ENCODE measurements at regions of chr1 and their contacts with region 1.

Region 1: GRCh38 chr1:153192697-153193096 is 10.5 kb upstream of the LELP1 start:
- DNase-seq: peak; percentile 77
- H3K4me3 Mint-ChIP-seq: no peak overlapping the region
- H3K27ac Mint-ChIP-seq: no peak overlapping the region
- H3K4me1 Mint-ChIP-seq: peaks cover 8% of the 10 kb centered on the region
- H3K27me3 Mint-ChIP-seq: peaks cover 27% of the 10 kb centered on the region
- CTCF ChIP-seq: peak; percentile 98

Region 2: DNA sequence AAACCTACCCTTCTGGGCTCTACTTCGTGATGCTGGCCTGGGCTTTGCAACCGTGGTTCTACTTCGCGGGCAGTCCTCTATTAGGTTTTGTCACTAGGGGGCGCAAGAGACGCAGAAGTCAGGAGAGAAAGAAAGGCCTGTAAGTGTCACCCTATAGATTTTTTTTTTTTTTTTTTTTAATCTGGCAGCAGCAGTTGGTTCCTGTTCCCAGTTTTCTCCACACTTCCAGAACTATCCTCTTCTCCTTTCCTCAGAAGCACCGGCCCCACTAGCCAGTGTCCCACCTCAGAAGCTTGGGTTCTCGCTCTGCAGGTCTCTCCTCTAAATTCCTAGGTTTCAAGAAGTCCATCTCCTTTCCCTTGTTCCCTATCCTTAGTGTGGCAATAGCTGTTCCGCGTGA is 538.6 kb before region 1 on chr1:
- CTCF ChIA-PET with region 1: interaction called, 125 read pairs
- POLR2A ChIA-PET with region 1: no interaction called
- intact Hi-C with region 1: loop called (anchors 1 kb)
- DNase-seq: peak; percentile 91
- H3K4me3 Mint-ChIP-seq: no peak overlapping the region
- H3K27ac Mint-ChIP-seq: no peak overlapping the region
- H3K4me1 Mint-ChIP-seq: no peaks in the 10 kb centered on the region
- H3K27me3 Mint-ChIP-seq: no peaks in the 10 kb centered on the region
- CTCF ChIP-seq: peak; percentile 87

Region 3: DNA sequence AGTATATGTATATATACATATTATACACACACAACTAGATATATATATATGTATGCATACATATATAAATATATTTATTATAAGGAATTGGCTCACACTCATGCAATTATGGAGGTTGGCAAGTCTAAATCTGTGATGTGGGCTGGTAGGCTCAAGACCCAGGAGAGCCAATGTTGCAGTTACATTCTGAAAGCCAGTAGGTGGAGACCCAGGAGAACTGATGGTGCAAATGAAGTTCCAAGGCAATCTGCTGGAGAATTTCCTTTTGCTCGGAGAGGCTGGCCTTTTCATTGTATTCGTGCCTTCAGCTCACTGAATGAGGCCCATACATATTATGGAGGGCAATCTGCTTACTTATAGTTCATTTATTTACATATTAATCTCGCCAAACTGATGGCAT is 274.9 kb before region 1 on chr1:
- CTCF ChIA-PET with region 1: interaction called, 172 read pairs
- POLR2A ChIA-PET with region 1: interaction called, 3 read pairs
- intact Hi-C with region 1: loop called (anchors 1 kb)
- DNase-seq: peak; percentile 37
- H3K4me3 Mint-ChIP-seq: no peak overlapping the region
- H3K27ac Mint-ChIP-seq: no peak overlapping the region
- H3K4me1 Mint-ChIP-seq: peaks cover 8% of the 10 kb centered on the region
- H3K27me3 Mint-ChIP-seq: no peaks in the 10 kb centered on the region
- CTCF ChIP-seq: peak; percentile 40

Region 4: DNA sequence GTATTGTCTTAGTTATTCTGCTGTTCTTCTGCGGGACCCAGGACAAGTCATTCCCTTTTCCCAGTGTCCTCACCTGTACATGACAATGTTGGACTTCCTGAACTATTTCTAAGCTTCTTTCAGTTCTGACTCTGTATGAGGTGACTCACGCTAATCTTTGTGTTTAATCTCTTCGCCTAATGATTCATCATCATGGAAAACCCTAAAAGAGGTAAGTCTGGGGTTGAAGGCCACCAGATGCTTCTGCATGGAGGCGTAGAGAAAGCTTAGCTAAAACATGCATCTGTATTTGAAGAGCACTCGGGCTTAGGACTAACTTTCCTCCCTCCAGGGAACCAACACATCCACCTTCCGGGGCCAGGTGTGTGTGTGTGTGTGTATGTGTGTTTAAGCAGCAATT is 238.3 kb before region 1 on chr1:
- CTCF ChIA-PET with region 1: interaction called, 8 read pairs
- POLR2A ChIA-PET with region 1: no interaction called
- intact Hi-C with region 1: loop called (anchors 1 kb)
- DNase-seq: peak; percentile 85
- H3K4me3 Mint-ChIP-seq: peak overlapping the region; percentile 48
- H3K27ac Mint-ChIP-seq: peak overlapping the region; percentile 5
- H3K4me1 Mint-ChIP-seq: peaks cover 24% of the 10 kb centered on the region
- H3K27me3 Mint-ChIP-seq: no peaks in the 10 kb centered on the region
- CTCF ChIP-seq: no peak

Region 5: GRCh38 chr1:153133267-153133666 is 59.4 kb before region 1 on chr1:
- CTCF ChIA-PET with region 1: interaction called, 11 read pairs
- POLR2A ChIA-PET with region 1: interaction called, 4 read pairs
- intact Hi-C with region 1: no loop called
- DNase-seq: no peak
- H3K4me3 Mint-ChIP-seq: no peak overlapping the region
- H3K27ac Mint-ChIP-seq: no peak overlapping the region
- H3K4me1 Mint-ChIP-seq: peaks cover 18% of the 10 kb centered on the region
- H3K27me3 Mint-ChIP-seq: no peaks in the 10 kb centered on the region
- CTCF ChIP-seq: no peak

Region 6: DNA sequence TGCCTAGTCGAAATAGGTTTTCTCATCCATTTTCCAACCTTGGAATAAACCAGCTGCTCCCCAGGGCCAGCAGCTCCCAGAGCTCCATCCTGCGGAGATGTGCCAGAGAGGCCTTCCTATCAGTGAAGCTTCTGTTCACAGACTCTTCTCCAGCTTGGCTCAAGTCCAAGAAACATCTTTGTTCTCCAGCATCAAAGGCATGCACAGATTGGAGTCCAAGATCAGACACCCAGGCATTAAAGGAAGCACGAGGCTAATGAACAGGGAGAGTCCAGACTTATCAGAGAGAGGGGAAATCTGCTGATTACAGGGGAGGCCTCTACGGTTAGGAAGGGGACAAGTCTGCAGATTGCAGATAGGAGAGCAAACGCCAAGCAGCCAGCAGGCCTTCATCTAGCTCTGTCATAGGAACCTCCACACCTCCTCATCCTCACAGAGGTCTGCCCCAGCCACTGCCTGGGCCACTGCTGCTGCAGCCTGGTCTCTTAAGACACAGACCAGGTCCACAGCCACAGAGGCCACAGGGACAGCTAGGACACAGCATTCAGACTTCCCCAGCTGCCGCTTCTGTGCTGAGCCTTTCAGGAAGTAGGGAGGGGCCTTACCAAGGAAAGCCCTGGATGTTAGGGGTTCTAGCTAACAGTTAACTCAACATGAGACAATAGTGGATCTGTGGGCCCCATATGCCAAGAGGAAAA is 28.1 kb after region 1 on chr1:
- CTCF ChIA-PET with region 1: interaction called, 185 read pairs
- POLR2A ChIA-PET with region 1: interaction called, 3 read pairs
- intact Hi-C with region 1: no loop called
- DNase-seq: no peak
- H3K4me3 Mint-ChIP-seq: no peak overlapping the region
- H3K27ac Mint-ChIP-seq: no peak overlapping the region
- H3K4me1 Mint-ChIP-seq: peaks cover 7% of the 10 kb centered on the region
- H3K27me3 Mint-ChIP-seq: peaks cover 23% of the 10 kb centered on the region
- CTCF ChIP-seq: no peak

Measured in MCF 10A (cell line).